G401 (cell line): ENCODE measurements at regions of chr15 and their contacts with region 1.

Region 1: GRCh38 chr15:83092309-83092976 is 15.0 kb upstream of the TM6SF1 start:
- DNase-seq: peak; percentile 8

Region 2: GRCh38 chr15:83153288-83153687 is 60.8 kb after region 1 on chr15:
- in situ Hi-C with region 1: loop called (anchors 5 kb)
- DNase-seq: no peak